Naive thymus-derived CD4-positive, alpha-beta T cell (primary cell): ENCODE measurements at regions of chr3 and their contacts with region 1.

Region 1: DNA sequence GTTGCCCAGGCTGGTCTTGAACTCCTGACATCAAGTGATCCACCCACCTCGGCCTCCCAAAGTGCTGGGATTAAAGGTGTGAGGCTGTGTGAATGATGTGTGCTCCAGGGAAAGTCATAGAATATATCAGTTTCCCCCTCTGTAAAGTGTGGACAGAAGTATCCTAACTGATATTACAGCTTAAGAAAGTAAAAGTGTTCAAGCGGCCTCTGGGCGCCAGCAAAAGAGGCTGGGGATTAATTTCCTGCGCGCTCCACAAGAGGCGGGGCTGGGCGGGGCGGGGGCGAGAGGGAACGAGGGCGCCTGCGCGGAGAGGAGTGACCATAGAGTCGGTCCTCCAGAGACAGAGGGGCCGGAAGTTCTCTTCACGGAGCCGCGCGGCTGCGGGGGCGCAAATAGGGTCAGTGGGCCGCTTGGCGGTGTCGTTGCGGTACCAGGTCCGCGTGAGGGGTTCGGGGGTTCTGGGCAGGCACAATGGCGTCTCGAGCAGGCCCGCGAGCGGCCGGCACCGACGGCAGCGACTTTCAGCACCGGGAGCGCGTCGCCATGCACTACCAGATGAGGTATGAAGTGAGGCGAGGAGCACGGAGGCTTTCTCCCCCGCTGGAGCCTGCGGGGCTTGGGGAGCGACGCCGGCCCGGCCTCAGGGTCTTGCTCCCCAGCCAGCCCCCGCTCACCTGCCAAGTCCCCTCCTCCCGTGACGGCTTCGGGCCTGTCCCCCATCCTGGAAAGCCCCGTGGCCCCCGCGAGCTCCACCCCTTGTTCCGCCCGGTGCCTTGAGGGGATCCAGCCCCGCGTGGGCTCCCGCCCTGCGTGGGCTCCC is at the start of gene JAGN1:
- DNase-seq: peak; percentile 78 to 92 (median 88)
- ATAC-seq: peak; percentile 93
- H3K4me3 ChIP-seq: peak within 1 kb of the TSS; percentile 99
- H3K4me3 Mint-ChIP-seq: peak within 1 kb of the TSS; percentile 91 to 100 (median 97)
- H3K27ac ChIP-seq: peak within 1 kb of the TSS; percentile 100
- H3K27ac Mint-ChIP-seq: peak within 1 kb of the TSS; percentile 92 to 99 (median 99)
- H3K4me1 ChIP-seq: peaks cover 8 to 15% of the 10 kb centered on the region in 2 donors
- H3K4me1 Mint-ChIP-seq: peaks cover 25 to 48% (median 36%) of the 10 kb centered on the region in 7 donors
- H3K27me3 ChIP-seq: no peaks in the 10 kb centered on the region
- H3K27me3 Mint-ChIP-seq: peaks cover 0 to 2% (median 0%) of the 10 kb centered on the region in 5 donors
- total RNA-seq, gene JAGN1: 16.0 to 34.5 (median 28.1) TPM

Region 2: DNA sequence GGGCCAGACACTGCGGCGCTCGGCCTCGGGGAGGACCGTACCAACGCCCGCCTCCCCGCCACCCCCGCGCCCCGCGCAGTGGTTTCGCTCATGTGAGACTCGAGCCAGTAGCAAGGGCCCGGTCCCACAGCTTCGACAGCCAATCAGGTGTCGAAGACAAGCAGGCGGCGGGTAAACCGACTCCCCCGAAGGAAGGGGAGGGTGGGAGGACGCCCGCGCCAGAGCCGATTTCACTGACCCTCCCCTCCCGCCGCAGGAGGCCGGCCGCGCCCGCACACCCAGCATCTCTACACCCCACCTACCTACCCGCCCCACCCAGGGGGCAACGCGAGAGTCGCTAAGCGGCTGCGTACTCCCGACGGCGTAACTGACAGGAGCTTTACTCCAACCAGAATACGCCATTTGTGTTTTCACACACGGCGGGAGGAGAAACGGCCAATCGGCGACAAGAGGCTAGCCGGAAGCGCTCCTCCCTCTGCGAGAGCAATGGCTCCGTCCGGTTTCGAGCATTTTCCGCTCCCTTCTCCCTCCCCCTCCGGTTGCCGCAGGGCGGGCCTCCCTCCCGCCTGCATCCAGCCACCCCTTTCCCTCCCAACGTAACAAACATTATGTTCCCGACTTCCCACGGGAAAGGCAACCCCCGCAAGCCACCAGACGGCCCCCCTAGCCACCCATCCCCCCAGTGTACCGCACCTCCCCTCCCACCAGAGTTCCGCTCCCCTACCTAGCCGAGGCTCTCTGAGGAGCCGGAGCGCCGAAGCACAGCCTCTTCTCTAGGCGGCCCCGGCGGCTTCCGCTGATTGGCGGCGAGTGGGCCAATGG is 493.5 kb before region 1 on chr3:
- CTCF ChIA-PET with region 1: interaction called, 3 read pairs
- POLR2A ChIA-PET with region 1: no interaction called
- intact Hi-C with region 1: loop called (anchors 1 to 2 kb)
- DNase-seq: peak; percentile 98 to 100 (median 99)
- ATAC-seq: peak; percentile 82
- H3K4me3 ChIP-seq: peak overlapping the region; percentile 85
- H3K4me3 Mint-ChIP-seq: peak overlapping the region; percentile 89 to 100 (median 96)
- H3K27ac ChIP-seq: peak overlapping the region; percentile 82
- H3K27ac Mint-ChIP-seq: peak overlapping the region; percentile 90 to 100 (median 98)
- H3K4me1 ChIP-seq: peaks cover 46 to 55% of the 10 kb centered on the region in 2 donors
- H3K4me1 Mint-ChIP-seq: peaks cover 59 to 80% (median 75%) of the 10 kb centered on the region in 7 donors
- H3K27me3 ChIP-seq: no peaks in the 10 kb centered on the region
- H3K27me3 Mint-ChIP-seq: peaks cover 0 to 2% (median 0%) of the 10 kb centered on the region in 5 donors

Region 3: GRCh38 chr3:9792405-9793160 is 97.9 kb before region 1 on chr3 and contains the starts of genes ARPC4 and TADA3:
- CTCF ChIA-PET with region 1: no interaction called
- POLR2A ChIA-PET with region 1: interaction called, 13 read pairs
- intact Hi-C with region 1: loop called (anchors 1 kb)
- DNase-seq: peak; percentile 83 to 96 (median 93)
- ATAC-seq: peak; percentile 92
- H3K4me3 ChIP-seq: peak within 1 kb of the TSS; percentile 81
- H3K4me3 Mint-ChIP-seq: peak within 1 kb of the TSS; percentile 90 to 100 (median 98)
- H3K27ac ChIP-seq: peak within 1 kb of the TSS; percentile 98
- H3K27ac Mint-ChIP-seq: peak within 1 kb of the TSS; percentile 97 to 100 (median 99)
- H3K4me1 ChIP-seq: peaks cover 47% of the 10 kb centered on the region in 2 donors
- H3K4me1 Mint-ChIP-seq: peaks cover 45 to 75% (median 63%) of the 10 kb centered on the region in 7 donors
- H3K27me3 ChIP-seq: no peaks in the 10 kb centered on the region
- H3K27me3 Mint-ChIP-seq: no peaks in the 10 kb centered on the region
- total RNA-seq, gene ARPC4: 128 to 273 (median 129) TPM
- total RNA-seq, gene TADA3: 31.6 to 67.4 (median 36.8) TPM

Region 4: DNA sequence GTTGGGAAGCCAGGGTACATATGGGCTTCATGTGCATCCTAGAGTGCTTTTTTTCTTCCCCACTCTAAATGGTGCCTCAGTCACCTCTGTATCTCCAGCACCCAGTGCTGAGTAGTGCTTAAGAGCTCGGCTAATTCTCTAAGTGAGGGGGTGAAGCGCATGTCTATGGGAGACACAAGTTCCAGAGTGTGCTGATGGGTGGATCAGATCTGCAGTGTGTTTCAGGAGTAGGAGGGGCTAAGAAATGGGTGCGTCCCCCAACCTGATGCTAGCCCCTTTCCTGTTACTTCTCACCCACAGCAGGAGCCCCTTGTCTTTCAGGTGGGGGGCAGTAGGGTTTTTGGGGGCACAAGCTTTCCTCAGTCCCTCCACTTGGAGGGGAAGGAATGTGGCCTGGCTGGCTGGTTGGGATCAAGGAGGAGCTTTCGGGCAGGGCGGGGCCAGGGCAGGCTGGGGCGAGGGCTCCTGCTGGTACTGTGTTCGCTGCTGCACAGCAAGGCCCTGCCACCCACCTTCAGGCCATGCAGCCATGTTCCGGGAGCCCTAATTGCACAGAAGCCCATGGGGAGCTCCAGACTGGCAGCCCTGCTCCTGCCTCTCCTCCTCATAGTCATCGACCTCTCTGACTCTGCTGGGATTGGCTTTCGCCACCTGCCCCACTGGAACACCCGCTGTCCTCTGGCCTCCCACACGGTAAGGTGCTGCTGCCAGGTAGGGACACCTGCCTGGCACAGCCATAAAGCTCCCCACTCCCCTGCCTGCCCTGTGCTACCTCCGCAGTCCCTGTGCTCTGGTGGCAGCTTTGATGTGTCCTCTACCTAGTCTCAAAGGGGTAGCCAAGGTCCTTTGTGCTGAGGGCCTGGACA is 12.1 kb after region 1 on chr3 and contains the start of gene IL17RE:
- CTCF ChIA-PET with region 1: interaction called, 3 read pairs
- POLR2A ChIA-PET with region 1: interaction called, 10 read pairs
- intact Hi-C with region 1: loop called in 1 of 2 experiments (anchors 1 kb)
- DNase-seq: no peak
- ATAC-seq: peak; percentile 38
- H3K4me3 ChIP-seq: no peak within 1 kb of the TSS
- H3K4me3 Mint-ChIP-seq: peak within 1 kb of the TSS in 7 of 10 donors; percentile 23 to 66 (median 37)
- H3K27ac ChIP-seq: no peak within 1 kb of the TSS
- H3K27ac Mint-ChIP-seq: peak within 1 kb of the TSS in 4 of 9 donors; percentile 42 to 76 (median 62)
- H3K4me1 ChIP-seq: peaks cover 10 to 13% of the 10 kb centered on the region in 2 donors
- H3K4me1 Mint-ChIP-seq: peaks cover 18 to 42% (median 32%) of the 10 kb centered on the region in 7 donors
- H3K27me3 ChIP-seq: no peaks in the 10 kb centered on the region
- H3K27me3 Mint-ChIP-seq: no peaks in the 10 kb centered on the region
- total RNA-seq, gene IL17RE: 0.19 to 2.2 (median 0.38) TPM

Region 5: DNA sequence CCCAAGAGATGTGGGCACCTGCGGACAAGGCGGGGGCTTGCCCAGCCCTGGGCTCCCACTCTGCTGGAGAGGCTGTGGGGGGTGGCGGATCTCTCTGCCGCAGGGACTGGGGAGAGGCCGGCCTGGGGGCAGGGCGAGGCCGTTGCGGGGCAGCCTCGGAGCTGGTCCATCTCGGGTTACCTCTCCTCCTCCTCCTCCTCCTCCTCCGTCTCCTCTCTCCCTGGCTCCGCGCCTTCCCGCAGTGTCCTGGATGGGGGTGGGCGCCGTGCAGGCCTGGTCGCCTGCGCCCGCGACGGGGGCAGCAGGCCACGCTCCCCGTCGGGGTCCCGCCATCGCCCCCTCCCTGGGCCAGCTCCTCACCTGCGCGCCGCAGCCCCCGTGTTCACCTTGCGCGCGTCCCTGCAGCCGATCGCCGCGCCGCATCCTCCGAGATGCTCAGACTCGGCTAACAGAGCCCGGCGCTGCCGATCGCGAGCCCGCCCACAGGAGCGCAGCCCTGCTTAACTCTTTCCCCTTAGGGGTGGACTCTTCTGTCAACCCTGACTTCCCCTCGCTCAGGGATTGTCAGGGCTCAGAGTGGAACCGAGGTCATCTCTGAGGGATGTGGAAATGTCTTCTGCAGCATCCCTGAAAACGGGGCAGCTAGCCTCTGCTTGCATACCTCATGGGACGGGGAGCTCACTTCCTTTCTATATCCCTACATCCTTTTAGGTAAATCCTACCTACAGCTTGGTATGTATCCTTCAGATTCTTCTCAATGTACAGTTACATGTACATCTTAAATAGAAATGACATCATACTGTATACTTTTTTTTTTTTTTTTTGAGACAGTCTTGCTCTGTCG is 61.7 kb after region 1 on chr3 and contains the start of gene PRRT3:
- CTCF ChIA-PET with region 1: no interaction called
- POLR2A ChIA-PET with region 1: interaction called, 8 read pairs
- intact Hi-C with region 1: loop called in 1 of 2 experiments (anchors 1 kb)
- DNase-seq: peak; percentile 23 to 63 (median 51)
- ATAC-seq: peak; percentile 89
- H3K4me3 ChIP-seq: peak within 1 kb of the TSS; percentile 51
- H3K4me3 Mint-ChIP-seq: peak within 1 kb of the TSS; percentile 83 to 91 (median 86)
- H3K27ac ChIP-seq: peak within 1 kb of the TSS; percentile 60
- H3K27ac Mint-ChIP-seq: peak within 1 kb of the TSS in 8 of 9 donors; percentile 36 to 70 (median 62)
- H3K4me1 ChIP-seq: peaks cover 11 to 15% of the 10 kb centered on the region in 2 donors
- H3K4me1 Mint-ChIP-seq: peaks cover 10 to 24% (median 16%) of the 10 kb centered on the region in 7 donors
- H3K27me3 ChIP-seq: no peaks in the 10 kb centered on the region
- H3K27me3 Mint-ChIP-seq: no peaks in the 10 kb centered on the region
- total RNA-seq, gene PRRT3: 5.1 to 10.8 (median 8.8) TPM

Region 6: GRCh38 chr3:10026084-10026890 is 135.8 kb after region 1 on chr3 and contains the start of gene FANCD2:
- CTCF ChIA-PET with region 1: no interaction called
- POLR2A ChIA-PET with region 1: no interaction called
- intact Hi-C with region 1: loop called in 1 of 2 experiments (anchors 1 kb)
- DNase-seq: peak; percentile 88 to 99 (median 94)
- ATAC-seq: peak; percentile 95
- H3K4me3 ChIP-seq: peak within 1 kb of the TSS; percentile 96
- H3K4me3 Mint-ChIP-seq: peak within 1 kb of the TSS; percentile 93 to 99 (median 96)
- H3K27ac ChIP-seq: peak within 1 kb of the TSS; percentile 89
- H3K27ac Mint-ChIP-seq: peak within 1 kb of the TSS; percentile 86 to 98 (median 97)
- H3K4me1 ChIP-seq: peaks cover 11 to 13% of the 10 kb centered on the region in 2 donors
- H3K4me1 Mint-ChIP-seq: peaks cover 0 to 45% (median 29%) of the 10 kb centered on the region in 7 donors
- H3K27me3 ChIP-seq: no peaks in the 10 kb centered on the region
- H3K27me3 Mint-ChIP-seq: no peaks in the 10 kb centered on the region
- total RNA-seq, gene FANCD2: 18.3 to 41.5 (median 34.1) TPM

Region 7: GRCh38 chr3:10248184-10249080 is 358.0 kb after region 1 on chr3 and contains the start of gene TATDN2:
- CTCF ChIA-PET with region 1: no interaction called
- POLR2A ChIA-PET with region 1: no interaction called
- intact Hi-C with region 1: loop called in 1 of 2 experiments (anchors 1 kb)
- DNase-seq: peak; percentile 80 to 91 (median 88)
- ATAC-seq: peak; percentile 98
- H3K4me3 ChIP-seq: peak within 1 kb of the TSS; percentile 99
- H3K4me3 Mint-ChIP-seq: peak within 1 kb of the TSS; percentile 96 to 100 (median 99)
- H3K27ac ChIP-seq: peak within 1 kb of the TSS; percentile 80
- H3K27ac Mint-ChIP-seq: peak within 1 kb of the TSS; percentile 91 to 97 (median 95)
- H3K4me1 ChIP-seq: peaks cover 28 to 30% of the 10 kb centered on the region in 2 donors
- H3K4me1 Mint-ChIP-seq: peaks cover 44 to 63% (median 52%) of the 10 kb centered on the region in 7 donors
- H3K27me3 ChIP-seq: no peaks in the 10 kb centered on the region
- H3K27me3 Mint-ChIP-seq: no peaks in the 10 kb centered on the region
- total RNA-seq, gene TATDN2: 52.9 to 88.8 (median 71.6) TPM